HCT116 (cell line): ENCODE measurements at regions of chr5 and their contacts with region 1.

Region 1: GRCh38 chr5:79133657-79134451 is 22.2 kb downstream of the BHMT start:
- DNase-seq: peak; percentile 74
- ATAC-seq: peak; percentile 89
- H3K4me3 ChIP-seq: peak overlapping the region; percentile 27 to 35
- H3K27ac ChIP-seq: peak overlapping the region; percentile 39
- H3K4me1 ChIP-seq: peaks cover 5 to 16% of the 10 kb centered on the region in 2 experiments; a peak in 3 of 4 replicates
- H3K27me3 ChIP-seq: no peaks in the 10 kb centered on the region
- CTCF ChIP-seq: peak; percentile 84 to 87 (median 85)
- POLR2A ChIP-seq: no peak
- RAD21 ChIP-seq: peak; percentile 88

Region 2: GRCh38 chr5:78984439-78985115 is 149.3 kb before region 1 on chr5:
- CTCF ChIA-PET with region 1: interaction called, 11 read pairs
- POLR2A ChIA-PET with region 1: no interaction called
- RAD21 ChIA-PET with region 1: interaction called, 3 read pairs
- intact Hi-C with region 1: loop called (anchors 2 kb)
- DNase-seq: peak; percentile 48
- ATAC-seq: peak; percentile 81
- H3K4me3 ChIP-seq: peak overlapping the region; percentile 48 to 66
- H3K27ac ChIP-seq: peak overlapping the region; percentile 90
- H3K4me1 ChIP-seq: peaks cover 16 to 37% of the 10 kb centered on the region in 2 experiments
- H3K27me3 ChIP-seq: no peaks in the 10 kb centered on the region
- CTCF ChIP-seq: peak in 1 of 3 experiments; percentile 35; a peak in 2 of 6 replicates
- POLR2A ChIP-seq: peak; percentile 70
- RAD21 ChIP-seq: no peak

Region 3: GRCh38 chr5:79020861-79021561 is 112.8 kb before region 1 on chr5:
- CTCF ChIA-PET with region 1: interaction called, 373 read pairs
- POLR2A ChIA-PET with region 1: interaction called, 7 read pairs
- RAD21 ChIA-PET with region 1: interaction called, 31 to 44 read pairs
- intact Hi-C with region 1: loop called (anchors 1 kb)
- DNase-seq: peak; percentile 58
- ATAC-seq: peak; percentile 92
- H3K4me3 ChIP-seq: peak overlapping the region in 1 of 2 experiments; percentile 13; a peak in 2 of 4 replicates
- H3K27ac ChIP-seq: no peak overlapping the region
- H3K4me1 ChIP-seq: peaks cover 2 to 15% of the 10 kb centered on the region in 2 experiments; a peak in 2 of 4 replicates
- H3K27me3 ChIP-seq: no peaks in the 10 kb centered on the region
- CTCF ChIP-seq: peak; percentile 68 to 95 (median 82)
- POLR2A ChIP-seq: no peak
- RAD21 ChIP-seq: peak; percentile 81

Region 4: DNA sequence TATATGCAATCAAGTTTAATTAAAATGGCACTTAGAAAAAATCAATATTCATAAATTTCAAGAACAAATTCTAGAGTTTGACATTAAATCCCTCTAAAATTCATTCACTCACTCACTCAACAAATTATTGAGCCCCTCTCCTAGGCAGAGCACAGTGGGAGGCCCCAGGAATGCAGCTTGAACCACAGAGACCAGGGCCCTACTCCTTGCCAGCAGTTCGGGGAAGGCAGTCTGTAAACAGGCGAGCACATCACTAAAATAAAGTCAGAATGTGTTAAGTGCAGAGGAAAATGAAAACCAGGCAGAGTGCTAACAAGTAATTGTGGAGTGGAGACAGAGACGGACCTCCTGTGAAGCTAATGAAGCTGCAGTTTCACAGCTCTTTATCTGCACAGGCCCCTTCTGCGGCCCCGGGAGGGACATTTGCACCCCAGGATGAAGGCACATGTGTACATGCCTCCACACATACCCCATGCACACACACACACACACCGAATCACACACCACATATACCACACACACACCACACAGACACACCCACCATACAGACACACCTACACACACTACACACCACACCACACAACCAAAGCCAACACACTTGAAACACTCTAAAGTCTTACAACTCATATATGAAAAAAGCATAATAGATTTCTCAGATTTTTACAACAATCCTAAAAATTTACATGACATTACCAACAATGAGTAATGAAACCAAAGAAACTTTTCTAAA is 18.3 kb after region 1 on chr5:
- CTCF ChIA-PET with region 1: interaction called, 10 read pairs
- POLR2A ChIA-PET with region 1: no interaction called
- RAD21 ChIA-PET with region 1: no interaction called
- intact Hi-C with region 1: no loop called
- DNase-seq: no peak
- ATAC-seq: no peak
- H3K4me3 ChIP-seq: no peak overlapping the region
- H3K27ac ChIP-seq: no peak overlapping the region
- H3K4me1 ChIP-seq: no peaks in the 10 kb centered on the region
- H3K27me3 ChIP-seq: no peaks in the 10 kb centered on the region
- CTCF ChIP-seq: no peak
- POLR2A ChIP-seq: no peak
- RAD21 ChIP-seq: no peak

Region 5: GRCh38 chr5:79464695-79465332 is 331.0 kb after region 1 on chr5:
- CTCF ChIA-PET with region 1: interaction called, 15 read pairs
- POLR2A ChIA-PET with region 1: no interaction called
- RAD21 ChIA-PET with region 1: no interaction called
- intact Hi-C with region 1: loop called (anchors 1 kb)
- DNase-seq: peak; percentile 10
- ATAC-seq: peak; percentile 71
- H3K4me3 ChIP-seq: no peak overlapping the region
- H3K27ac ChIP-seq: no peak overlapping the region
- H3K4me1 ChIP-seq: no peaks in the 10 kb centered on the region
- H3K27me3 ChIP-seq: no peaks in the 10 kb centered on the region
- CTCF ChIP-seq: peak; percentile 44 to 81 (median 78); a peak in 5 of 6 replicates
- POLR2A ChIP-seq: no peak
- RAD21 ChIP-seq: peak; percentile 84

Region 6: DNA sequence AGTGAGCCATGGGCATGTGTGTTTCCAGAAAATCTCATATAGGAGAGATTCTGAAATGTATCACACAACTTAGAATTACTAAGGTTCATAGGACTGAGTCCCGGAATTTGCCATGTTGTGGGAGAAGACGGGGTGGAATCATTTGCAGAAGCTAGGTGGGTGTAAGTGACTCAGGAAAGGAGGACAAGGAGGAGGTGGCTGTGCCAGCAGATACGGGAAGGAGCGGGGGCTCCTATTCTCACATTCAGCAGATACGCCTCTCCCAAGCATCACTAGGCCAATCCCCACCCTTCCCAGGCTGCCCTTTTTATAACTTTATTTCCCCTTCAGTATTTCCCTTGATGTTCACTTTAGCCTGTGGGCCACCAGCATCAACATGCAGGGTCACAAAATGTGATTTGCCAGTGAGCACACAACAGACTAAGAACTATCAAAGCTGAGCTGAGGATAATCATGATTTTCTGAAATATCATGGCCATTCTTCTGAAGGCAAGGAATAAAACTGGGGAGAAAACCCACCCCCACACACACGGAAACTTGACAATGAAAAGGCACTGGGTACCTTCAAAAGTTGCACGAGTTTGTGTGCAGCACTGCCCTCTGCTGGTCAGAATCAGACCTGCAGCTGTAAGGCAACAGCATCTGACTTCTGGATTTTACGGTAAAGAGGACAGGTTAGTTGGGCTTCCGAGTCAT is 724.0 kb after region 1 on chr5:
- CTCF ChIA-PET with region 1: interaction called, 3 read pairs
- POLR2A ChIA-PET with region 1: interaction called, 4 read pairs
- RAD21 ChIA-PET with region 1: no interaction called
- intact Hi-C with region 1: loop called (anchors 10 kb)
- DNase-seq: peak; percentile 49
- ATAC-seq: peak; percentile 76
- H3K4me3 ChIP-seq: no peak overlapping the region
- H3K27ac ChIP-seq: no peak overlapping the region
- H3K4me1 ChIP-seq: peaks cover 4 to 11% of the 10 kb centered on the region in 2 experiments; a peak in 3 of 4 replicates
- H3K27me3 ChIP-seq: no peaks in the 10 kb centered on the region
- CTCF ChIP-seq: peak; percentile 75 to 98 (median 95); a peak in 5 of 6 replicates
- POLR2A ChIP-seq: no peak
- RAD21 ChIP-seq: peak; percentile 89